ENCODE measurements at regions of chr15 and their contacts with region 1.

Region 1: DNA sequence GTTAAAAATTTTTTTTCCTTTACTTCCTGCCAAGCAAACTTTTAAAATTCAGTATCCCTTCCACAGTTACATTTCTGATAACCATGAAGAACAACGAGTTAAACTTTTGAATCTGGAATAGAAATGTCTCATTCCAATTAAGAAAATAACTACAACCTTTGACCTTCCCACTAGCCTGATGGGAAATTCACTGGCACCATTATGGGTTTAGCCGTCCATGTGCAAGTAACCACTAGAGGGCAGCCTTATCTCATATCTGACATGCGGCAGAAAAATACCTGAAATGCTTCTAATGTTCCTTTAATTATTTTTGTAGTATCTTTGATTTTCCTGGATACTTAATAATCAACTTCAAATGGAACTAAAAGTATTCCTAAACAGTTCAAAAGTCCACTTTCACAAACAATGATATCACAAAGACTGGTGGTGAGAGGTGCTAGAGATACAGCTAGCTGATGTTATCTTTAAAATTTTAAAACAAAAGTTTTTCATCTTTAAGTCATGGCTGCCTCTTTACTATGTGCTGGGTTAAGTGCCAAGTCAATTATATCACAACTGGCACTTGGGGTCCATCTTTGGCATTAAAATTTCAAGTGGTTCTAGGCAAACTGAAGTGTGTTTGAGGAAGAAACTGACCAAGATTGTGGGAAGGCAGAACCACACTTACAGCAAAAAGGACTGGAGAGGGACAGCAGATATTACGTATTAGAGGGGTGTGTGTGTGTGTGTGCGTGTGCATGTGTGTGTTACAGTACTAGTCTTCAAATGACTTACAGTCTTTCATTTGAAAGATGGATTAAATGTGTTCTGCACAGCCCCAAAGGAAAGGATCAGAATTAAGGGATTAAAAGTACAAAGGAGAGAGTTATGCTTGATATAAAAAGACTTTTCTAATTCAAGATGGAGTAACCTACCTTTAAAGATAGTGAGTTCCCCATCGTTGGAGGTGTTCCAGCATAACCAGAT is 107.1 kb upstream of the ICE2 start:
- DNase-seq: peak; percentile 66
- H3K4me3 ChIP-seq: no peak overlapping the region; a peak in 1 of 4 replicates
- H3K27ac ChIP-seq: no peak overlapping the region
- H3K4me1 ChIP-seq: peaks cover 0 to 3% of the 10 kb centered on the region in 2 experiments; a peak in 3 of 4 replicates
- H3K27me3 ChIP-seq: no peaks in the 10 kb centered on the region
- CTCF ChIP-seq: peak; percentile 98
- EP300 ChIP-seq: no peak
- RAD21 ChIP-seq: peak; percentile 97

Region 2: GRCh38 chr15:60573936-60574335 is 12.1 kb before region 1 on chr15:
- CTCF ChIA-PET with region 1: interaction called, 44 read pairs
- POLR2A ChIA-PET with region 1: no interaction called
- DNase-seq: no peak
- H3K4me3 ChIP-seq: no peak overlapping the region
- H3K27ac ChIP-seq: no peak overlapping the region
- H3K4me1 ChIP-seq: no peaks in the 10 kb centered on the region; a peak in 1 of 4 replicates
- H3K27me3 ChIP-seq: no peaks in the 10 kb centered on the region
- CTCF ChIP-seq: no peak
- EP300 ChIP-seq: no peak
- RAD21 ChIP-seq: no peak

Region 3: GRCh38 chr15:60722328-60723112 is 136.5 kb after region 1 on chr15:
- CTCF ChIA-PET with region 1: no interaction called
- POLR2A ChIA-PET with region 1: no interaction called
- DNase-seq: no peak
- H3K4me3 ChIP-seq: no peak overlapping the region
- H3K27ac ChIP-seq: no peak overlapping the region
- H3K4me1 ChIP-seq: no peaks in the 10 kb centered on the region; a peak in 1 of 4 replicates
- H3K27me3 ChIP-seq: no peaks in the 10 kb centered on the region
- CTCF ChIP-seq: no peak
- EP300 ChIP-seq: no peak
- RAD21 ChIP-seq: no peak

Region 4: DNA sequence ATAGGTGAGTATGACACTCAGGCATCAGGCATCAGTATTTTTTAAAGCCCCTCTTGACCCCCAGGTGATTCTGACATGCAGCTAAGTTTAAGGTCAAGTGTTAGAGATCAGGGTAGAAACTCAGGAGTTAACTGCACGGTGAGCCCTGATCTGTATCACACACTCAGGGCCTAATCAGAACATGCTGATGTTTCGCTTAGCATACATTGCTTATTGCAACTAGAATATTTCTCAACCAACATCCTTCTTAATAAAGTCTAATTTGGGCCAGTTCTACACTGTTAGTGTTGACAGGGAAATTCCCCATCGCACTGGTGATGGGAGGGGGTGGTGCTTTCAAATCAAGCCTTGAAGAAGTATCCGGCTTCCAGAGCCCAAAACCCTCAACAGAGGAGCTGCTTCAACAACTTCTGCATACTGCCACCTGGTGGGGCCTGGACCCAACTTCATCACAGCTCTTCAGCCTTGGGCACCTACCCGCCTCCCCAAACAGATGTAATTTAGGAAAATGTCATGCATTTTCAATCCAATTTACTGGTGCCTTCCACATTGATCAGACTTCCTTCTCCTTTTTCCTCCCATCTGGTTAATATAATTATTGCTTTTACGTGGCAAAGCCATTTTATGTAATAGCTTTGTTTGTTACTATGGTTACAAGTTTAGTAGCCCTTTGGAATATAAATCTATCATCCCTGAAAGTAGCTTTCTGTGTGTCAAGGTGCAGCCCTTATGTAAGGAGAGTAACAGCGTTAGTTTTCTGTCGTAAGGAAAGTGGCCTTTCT is 330.8 kb after region 1 on chr15:
- CTCF ChIA-PET with region 1: interaction called, 95 read pairs
- POLR2A ChIA-PET with region 1: interaction called, 3 read pairs
- DNase-seq: peak; percentile 73
- H3K4me3 ChIP-seq: no peak overlapping the region; a peak in 1 of 4 replicates
- H3K27ac ChIP-seq: no peak overlapping the region
- H3K4me1 ChIP-seq: peaks cover 0 to 4% of the 10 kb centered on the region in 2 experiments; a peak in 1 of 4 replicates
- H3K27me3 ChIP-seq: no peaks in the 10 kb centered on the region
- CTCF ChIP-seq: peak; percentile 83
- EP300 ChIP-seq: no peak
- RAD21 ChIP-seq: peak; percentile 89

Region 5: GRCh38 chr15:61051569-61052031 is 465.6 kb after region 1 on chr15:
- CTCF ChIA-PET with region 1: interaction called, 30 read pairs
- POLR2A ChIA-PET with region 1: no interaction called
- DNase-seq: peak; percentile 61
- H3K4me3 ChIP-seq: no peak overlapping the region
- H3K27ac ChIP-seq: no peak overlapping the region
- H3K4me1 ChIP-seq: peaks cover 0 to 22% of the 10 kb centered on the region in 2 experiments; a peak in 2 of 4 replicates
- H3K27me3 ChIP-seq: no peaks in the 10 kb centered on the region
- CTCF ChIP-seq: peak; percentile 81
- EP300 ChIP-seq: no peak
- RAD21 ChIP-seq: peak; percentile 95

Measured in SK-N-SH (cell line).